ENCODE measurements at regions of chr18 and their contacts with region 1.

Region 1: GRCh38 chr18:25446972-25447371 is 95.0 kb upstream of the ZNF521 start:
- DNase-seq: no peak
- H3K4me3 ChIP-seq: no peak overlapping the region
- H3K27ac ChIP-seq: no peak overlapping the region
- H3K4me1 ChIP-seq: peaks cover 0 to 6% of the 10 kb centered on the region in 2 donors
- H3K27me3 ChIP-seq: no peaks in the 10 kb centered on the region
- CTCF ChIP-seq: no peak
- POLR2A ChIP-seq: no peak

Region 2: GRCh38 chr18:25495606-25496005 is 48.6 kb after region 1 on chr18:
- intact Hi-C with region 1: loop called in 1 of 2 experiments (anchors 10 kb)
- DNase-seq: no peak
- H3K4me3 ChIP-seq: no peak overlapping the region
- H3K27ac ChIP-seq: no peak overlapping the region
- H3K4me1 ChIP-seq: no peaks in the 10 kb centered on the region
- H3K27me3 ChIP-seq: no peaks in the 10 kb centered on the region
- CTCF ChIP-seq: no peak
- POLR2A ChIP-seq: no peak